ENCODE measurements at regions of chr2 and their contacts with region 1.

Region 1: GRCh38 chr2:128027801-128028667 is at the start of gene SAP130:
- DNase-seq: peak; percentile 91 to 99
- H3K4me3 ChIP-seq: peak within 1 kb of the TSS; percentile 98
- H3K27ac ChIP-seq: peak within 1 kb of the TSS; percentile 28; the same call in 1 of the 2 replicates
- H3K4me1 ChIP-seq: peaks cover 17% of the 10 kb centered on the region
- H3K27me3 ChIP-seq: no peaks in the 10 kb centered on the region
- CTCF ChIP-seq: no peak
- total RNA-seq, gene SAP130: 27.2 and 33.9 TPM in 2 replicates

Region 2: DNA sequence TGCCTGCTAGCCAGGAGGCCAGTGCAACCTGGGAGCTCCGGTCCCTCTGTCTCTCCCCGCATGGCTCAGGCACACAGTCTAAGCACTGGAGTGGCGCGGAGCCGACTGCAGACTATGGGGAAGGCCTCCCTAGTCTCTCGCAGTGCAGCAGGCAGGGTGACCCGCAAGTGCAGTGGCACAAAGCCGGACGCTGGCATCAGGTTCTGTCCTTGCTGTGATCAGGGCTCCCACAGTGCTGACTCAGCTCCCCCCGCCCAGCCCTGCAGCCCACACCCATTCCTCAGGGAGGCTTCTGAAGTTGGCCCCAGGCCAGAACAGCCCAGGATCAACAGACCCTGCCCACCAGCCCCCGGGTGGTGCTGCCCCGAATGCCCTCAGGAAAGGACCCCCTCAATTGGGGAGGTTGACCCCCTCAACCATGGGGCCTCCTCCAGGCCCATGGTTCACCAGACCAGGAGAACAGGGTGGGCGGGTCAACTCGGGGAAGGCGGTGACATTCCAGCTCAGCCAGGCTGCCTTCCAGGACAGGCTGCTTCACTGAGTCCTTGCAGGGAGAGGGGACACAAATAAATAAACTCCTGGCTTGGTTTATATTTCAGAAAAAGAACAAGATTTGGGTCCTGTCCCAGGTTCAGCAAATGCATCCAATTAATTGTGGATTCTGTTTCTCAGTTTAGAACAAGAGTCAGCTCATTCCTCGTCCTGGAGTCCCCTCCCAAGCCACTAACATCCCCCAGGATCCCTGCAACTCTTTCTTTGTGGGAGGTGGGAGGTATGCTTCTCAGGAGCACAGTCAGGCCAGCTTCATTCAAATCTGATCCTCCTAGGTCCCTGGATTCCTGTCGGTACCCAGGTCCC is 933.3 kb before region 1 on chr2:
- CTCF ChIA-PET with region 1: no interaction called
- POLR2A ChIA-PET with region 1: no interaction called
- intact Hi-C with region 1: loop called (anchors 5 kb)
- DNase-seq: peak; percentile 71 to 88
- H3K4me3 ChIP-seq: peak overlapping the region; percentile 5; the same call in 1 of the 2 replicates
- H3K27ac ChIP-seq: peak overlapping the region; percentile 51
- H3K4me1 ChIP-seq: peaks cover 43% of the 10 kb centered on the region
- H3K27me3 ChIP-seq: no peaks in the 10 kb centered on the region
- CTCF ChIP-seq: no peak

Region 3: GRCh38 chr2:127901339-127902056 is 126.5 kb before region 1 on chr2:
- CTCF ChIA-PET with region 1: no interaction called
- POLR2A ChIA-PET with region 1: no interaction called
- intact Hi-C with region 1: no loop called
- DNase-seq: no peak
- H3K4me3 ChIP-seq: no peak overlapping the region
- H3K27ac ChIP-seq: no peak overlapping the region
- H3K4me1 ChIP-seq: no peaks in the 10 kb centered on the region
- H3K27me3 ChIP-seq: peaks cover 19% of the 10 kb centered on the region; the same call in 1 of the 2 replicates
- CTCF ChIP-seq: no peak

Region 4: DNA sequence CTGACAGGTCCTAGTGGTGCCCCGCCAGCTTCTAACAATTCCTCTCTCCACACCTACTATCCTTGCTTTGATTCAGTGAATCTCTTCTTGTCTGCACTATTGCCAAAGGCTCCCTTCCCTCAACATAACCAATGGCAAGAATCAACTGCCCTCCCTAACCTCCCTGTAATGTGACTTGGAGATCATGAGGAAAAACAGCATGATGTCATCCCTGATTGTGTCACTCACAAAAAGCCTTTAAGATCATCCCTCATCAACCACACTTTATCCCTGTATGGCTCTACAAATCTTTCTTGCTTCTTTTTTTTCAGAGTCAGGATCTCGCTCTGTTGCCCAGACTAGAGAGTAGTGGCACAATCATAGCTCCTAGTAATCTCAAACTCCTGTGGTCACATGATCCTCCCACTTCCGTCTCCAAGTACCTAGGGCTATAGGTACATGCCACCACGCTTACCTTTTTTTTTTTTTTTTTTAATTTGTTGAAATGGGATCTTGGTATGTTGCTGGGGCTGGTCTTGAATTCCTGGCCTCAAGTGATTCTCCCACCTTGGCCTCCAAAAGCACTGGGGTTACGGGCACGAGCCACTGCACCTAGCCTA is 19.9 kb before region 1 on chr2:
- CTCF ChIA-PET with region 1: no interaction called
- POLR2A ChIA-PET with region 1: no interaction called
- intact Hi-C with region 1: no loop called
- DNase-seq: no peak
- H3K4me3 ChIP-seq: no peak overlapping the region
- H3K27ac ChIP-seq: no peak overlapping the region
- H3K4me1 ChIP-seq: no peaks in the 10 kb centered on the region
- H3K27me3 ChIP-seq: no peaks in the 10 kb centered on the region
- CTCF ChIP-seq: no peak